PC-3 (cell line): ENCODE measurements at regions of chr12 and their contacts with region 1.

Region 1: GRCh38 chr12:98572010-98572409 is 21.5 kb upstream of the SLC25A3 start:
- DNase-seq: no peak
- ATAC-seq: no peak
- H3K4me3 ChIP-seq: no peak overlapping the region
- H3K27ac ChIP-seq: no peak overlapping the region
- H3K4me1 ChIP-seq: peaks cover 6% of the 10 kb centered on the region
- H3K27me3 ChIP-seq: no peaks in the 10 kb centered on the region
- CTCF ChIP-seq: peak; percentile 57

Region 2: GRCh38 chr12:98515368-98516183 is 56.4 kb before region 1 on chr12 and contains the start of gene TMPO:
- CTCF ChIA-PET with region 1: no interaction called
- POLR2A ChIA-PET with region 1: no interaction called
- intact Hi-C with region 1: no loop called
- DNase-seq: peak; percentile 97
- ATAC-seq: peak; percentile 77
- H3K4me3 ChIP-seq: peak within 1 kb of the TSS; percentile 98
- H3K27ac ChIP-seq: peak within 1 kb of the TSS; percentile 89
- H3K4me1 ChIP-seq: peaks cover 31% of the 10 kb centered on the region
- H3K27me3 ChIP-seq: no peaks in the 10 kb centered on the region
- CTCF ChIP-seq: no peak
- total RNA-seq, gene TMPO: 155 and 160 TPM in 2 replicates

Region 3: DNA sequence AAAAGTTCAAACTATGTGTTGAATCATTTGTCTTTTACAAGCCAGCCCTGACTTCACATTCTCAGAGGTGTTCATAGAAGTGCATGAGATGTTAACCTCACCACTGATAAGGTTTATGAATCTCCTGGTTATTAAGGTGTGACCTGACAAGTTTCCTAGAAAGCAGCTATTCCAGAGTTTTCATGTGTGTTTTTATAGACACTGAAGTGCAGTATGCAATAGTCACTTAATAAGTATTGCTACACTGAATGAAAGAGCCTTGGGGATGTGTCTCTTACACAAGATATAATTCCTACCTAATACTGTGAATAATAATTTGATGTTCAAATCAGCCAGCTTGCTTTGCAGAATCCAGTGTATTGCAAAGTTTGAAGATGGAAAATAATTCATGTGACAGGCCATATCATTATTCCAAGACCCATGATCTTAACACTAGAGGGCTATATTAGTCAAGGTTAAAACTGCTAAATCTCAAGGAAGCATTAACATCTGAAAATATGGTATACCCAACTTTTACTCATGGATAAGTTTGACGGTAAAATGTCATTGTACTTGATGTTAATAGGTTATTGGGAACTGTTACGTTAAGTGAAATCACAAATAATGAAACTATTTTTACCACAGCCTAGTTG is 34.5 kb after region 1 on chr12:
- CTCF ChIA-PET with region 1: interaction called, 13 read pairs
- POLR2A ChIA-PET with region 1: no interaction called
- intact Hi-C with region 1: no loop called
- DNase-seq: no peak
- ATAC-seq: peak; percentile 61; the same call in 1 of the 2 replicates
- H3K4me3 ChIP-seq: no peak overlapping the region
- H3K27ac ChIP-seq: no peak overlapping the region
- H3K4me1 ChIP-seq: no peaks in the 10 kb centered on the region
- H3K27me3 ChIP-seq: no peaks in the 10 kb centered on the region
- CTCF ChIP-seq: peak; percentile 35

Region 4: DNA sequence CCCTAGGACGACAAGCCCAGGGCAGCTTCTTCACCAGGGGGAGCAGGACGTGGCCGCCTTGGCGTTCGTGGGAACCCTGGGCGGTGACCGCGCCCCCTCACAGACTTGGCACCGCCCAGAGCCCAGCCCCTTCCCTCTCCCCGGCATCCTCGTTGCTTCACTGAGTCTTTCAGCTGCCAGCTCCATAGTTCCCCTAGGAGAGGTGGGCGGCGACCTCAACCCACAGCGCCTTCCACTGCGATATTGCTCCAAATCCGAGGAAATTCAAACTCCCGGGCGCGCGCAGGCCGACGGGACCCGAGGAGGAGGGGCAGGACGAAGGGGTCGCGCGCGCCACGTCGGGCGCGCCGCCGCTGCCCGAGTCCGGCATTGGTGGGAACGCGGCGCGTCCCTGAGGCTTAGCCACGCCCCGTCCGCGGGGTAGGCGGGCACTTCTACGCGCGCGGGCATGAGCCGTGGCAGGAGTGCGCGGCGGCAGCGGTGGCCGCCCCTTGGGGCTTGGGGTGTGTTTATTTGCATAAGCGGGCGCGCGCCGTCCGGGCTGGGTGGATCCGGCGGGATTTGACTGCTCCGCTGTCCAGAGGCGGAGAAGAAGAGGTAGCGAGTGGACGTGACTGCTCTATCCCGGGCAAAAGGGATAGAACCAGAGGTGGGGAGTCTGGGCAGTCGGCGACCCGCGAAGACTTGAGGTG is 72.8 kb after region 1 on chr12 and contains the starts of genes APAF1 and IKBIP:
- CTCF ChIA-PET with region 1: interaction called, 7 read pairs
- POLR2A ChIA-PET with region 1: interaction called, 16 read pairs
- intact Hi-C with region 1: no loop called
- DNase-seq: peak; percentile 97
- ATAC-seq: peak; percentile 86
- H3K4me3 ChIP-seq: peak within 1 kb of the TSS; percentile 88
- H3K27ac ChIP-seq: peak within 1 kb of the TSS; percentile 51
- H3K4me1 ChIP-seq: peaks cover 6% of the 10 kb centered on the region
- H3K27me3 ChIP-seq: no peaks in the 10 kb centered on the region
- CTCF ChIP-seq: no peak
- total RNA-seq, gene APAF1: 8.5 and 10.1 TPM in 2 replicates
- total RNA-seq, gene IKBIP: 11.1 and 14.6 TPM in 2 replicates

Region 5: GRCh38 chr12:99611117-99611516 is 1039.1 kb after region 1 on chr12:
- CTCF ChIA-PET with region 1: no interaction called
- POLR2A ChIA-PET with region 1: no interaction called
- intact Hi-C with region 1: no loop called
- DNase-seq: peak; percentile 38
- ATAC-seq: peak; percentile 31; the same call in 1 of the 2 replicates
- H3K4me3 ChIP-seq: no peak overlapping the region
- H3K27ac ChIP-seq: no peak overlapping the region
- H3K4me1 ChIP-seq: no peaks in the 10 kb centered on the region
- H3K27me3 ChIP-seq: no peaks in the 10 kb centered on the region
- CTCF ChIP-seq: no peak